Activated CD4-positive, alpha-beta T cell treated with anti-CD3 and anti-CD28 coated beads for 36 hours (primary cell): ENCODE measurements at regions of chr12 and their contacts with region 1.

Region 1: DNA sequence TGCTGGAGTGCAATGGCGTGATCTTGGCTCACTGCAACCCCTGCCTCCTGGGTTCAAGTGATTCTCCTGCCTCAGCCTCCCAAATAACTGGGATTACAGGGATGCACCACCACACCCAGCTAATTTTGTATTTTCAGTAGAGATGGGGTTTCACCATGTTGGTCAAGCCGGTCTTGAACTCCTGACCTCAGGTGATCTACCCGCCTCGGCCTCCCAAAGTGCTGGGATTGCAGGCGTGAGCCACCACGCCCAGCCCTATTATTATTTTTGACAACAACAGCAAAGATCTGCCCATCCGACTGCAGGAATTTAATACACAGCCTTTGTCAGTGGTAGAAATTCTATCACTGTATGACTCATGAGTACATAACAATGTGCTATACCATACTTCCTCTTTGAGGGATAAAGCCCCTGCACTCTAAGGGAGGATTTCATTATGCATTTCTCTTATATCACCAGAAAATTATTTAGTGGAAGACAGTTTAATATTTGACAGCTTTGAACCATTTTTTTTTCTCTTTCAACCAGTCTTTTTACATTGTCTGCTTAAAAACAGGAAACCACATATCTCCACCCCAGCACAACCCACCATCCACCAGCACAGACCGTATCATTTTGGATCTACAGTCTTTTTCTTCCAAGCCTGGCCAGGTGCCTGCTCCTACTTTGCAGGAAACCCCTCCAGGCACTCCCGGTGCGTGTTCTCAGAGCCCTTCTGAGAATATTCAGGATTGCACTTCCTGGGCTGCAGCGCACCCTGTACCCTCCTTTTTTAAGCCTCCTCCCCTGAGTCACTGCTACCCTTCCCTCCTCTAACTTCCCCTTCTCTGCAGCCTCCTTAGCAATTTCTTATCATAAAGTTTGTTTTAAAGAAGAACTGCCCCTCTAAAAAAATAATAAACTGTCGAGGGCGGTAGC is 594 bp downstream of the ARHGDIB start:
- DNase-seq: peak; percentile 56
- ATAC-seq: peak; percentile 53
- H3K4me3 Mint-ChIP-seq: peak overlapping the region; percentile 96
- H3K27ac Mint-ChIP-seq: peak overlapping the region; percentile 99
- H3K4me1 Mint-ChIP-seq: peaks cover 55% of the 10 kb centered on the region
- H3K27me3 Mint-ChIP-seq: no peaks in the 10 kb centered on the region

Region 2: GRCh38 chr12:14803011-14803829 is 157.6 kb before region 1 on chr12 and contains the starts of genes C12orf60 and WBP11:
- CTCF ChIA-PET with region 1: no interaction called
- POLR2A ChIA-PET with region 1: no interaction called
- intact Hi-C with region 1: loop called (anchors 1 to 2 kb)
- DNase-seq: peak; percentile 92
- ATAC-seq: peak; percentile 99
- H3K4me3 Mint-ChIP-seq: no peak within 1 kb of the TSS
- H3K27ac Mint-ChIP-seq: no peak within 1 kb of the TSS
- H3K4me1 Mint-ChIP-seq: peaks cover 33% of the 10 kb centered on the region
- H3K27me3 Mint-ChIP-seq: no peaks in the 10 kb centered on the region
- total RNA-seq, gene C12orf60: 2.9 to 3.0 TPM
- total RNA-seq, gene WBP11: 143 to 193 TPM

Region 3: GRCh38 chr12:14937689-14938088 is 23.1 kb before region 1 on chr12:
- CTCF ChIA-PET with region 1: interaction called, 3 read pairs
- POLR2A ChIA-PET with region 1: interaction called, 4 read pairs
- intact Hi-C with region 1: loop called in 1 of 2 experiments (anchors 1 kb)
- DNase-seq: peak; percentile 42
- ATAC-seq: peak; percentile 31
- H3K4me3 Mint-ChIP-seq: no peak overlapping the region
- H3K27ac Mint-ChIP-seq: peak overlapping the region; percentile 44
- H3K4me1 Mint-ChIP-seq: peaks cover 30% of the 10 kb centered on the region
- H3K27me3 Mint-ChIP-seq: no peaks in the 10 kb centered on the region

Region 4: DNA sequence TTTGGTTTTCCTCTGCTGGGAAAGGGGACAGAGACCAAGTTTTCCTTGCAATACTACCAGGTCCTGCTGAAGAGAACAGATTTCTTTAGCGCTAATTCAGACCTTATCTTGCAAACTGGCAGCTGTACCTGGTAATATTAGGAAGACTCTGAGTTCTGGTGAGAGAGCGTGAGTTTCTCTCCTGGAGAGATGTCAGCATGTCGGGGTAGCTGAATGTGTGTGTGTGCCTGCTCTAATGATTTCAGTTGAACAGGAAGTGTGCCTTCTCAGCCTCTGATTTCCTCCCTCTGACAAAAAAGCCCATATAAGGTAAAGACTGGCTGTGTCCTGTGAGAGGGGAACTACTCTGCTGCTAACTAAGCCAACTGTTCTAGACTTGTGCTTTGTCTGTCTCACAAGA is 12.1 kb before region 1 on chr12:
- CTCF ChIA-PET with region 1: interaction called, 27 read pairs
- POLR2A ChIA-PET with region 1: interaction called, 4 read pairs
- intact Hi-C with region 1: loop called in 1 of 2 experiments (anchors 1 kb)
- DNase-seq: peak; percentile 68
- ATAC-seq: peak; percentile 82
- H3K4me3 Mint-ChIP-seq: peak overlapping the region; percentile 73
- H3K27ac Mint-ChIP-seq: peak overlapping the region; percentile 96
- H3K4me1 Mint-ChIP-seq: peaks cover 87% of the 10 kb centered on the region
- H3K27me3 Mint-ChIP-seq: no peaks in the 10 kb centered on the region

Region 5: DNA sequence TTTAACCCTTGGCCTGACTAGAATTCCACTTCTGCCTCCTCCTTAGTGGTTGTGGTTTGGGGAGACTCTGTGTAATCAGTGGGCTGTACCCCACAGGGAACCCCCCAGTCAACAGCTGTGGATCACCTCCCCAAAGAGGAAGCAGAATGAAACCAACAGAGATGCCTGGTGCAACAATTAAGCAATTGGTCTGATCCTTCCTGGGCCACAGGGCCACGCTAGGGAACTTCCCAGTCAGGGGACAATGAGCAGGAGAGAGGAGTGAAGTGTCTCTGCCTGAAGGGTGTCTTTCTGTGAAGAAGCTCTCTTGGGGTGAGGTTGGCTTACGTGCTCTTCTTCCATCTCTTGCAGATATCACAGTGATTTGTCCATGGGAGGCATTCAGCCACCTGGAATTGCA is 20.2 kb after region 1 on chr12:
- CTCF ChIA-PET with region 1: interaction called, 5 read pairs
- POLR2A ChIA-PET with region 1: interaction called, 4 read pairs
- intact Hi-C with region 1: loop called in 1 of 2 experiments (anchors 2 kb)
- DNase-seq: no peak
- ATAC-seq: no peak
- H3K4me3 Mint-ChIP-seq: no peak overlapping the region
- H3K27ac Mint-ChIP-seq: no peak overlapping the region
- H3K4me1 Mint-ChIP-seq: peaks cover 63% of the 10 kb centered on the region
- H3K27me3 Mint-ChIP-seq: no peaks in the 10 kb centered on the region